CD4-positive, alpha-beta T cell (primary cell): ENCODE measurements at regions of chr10 and their contacts with region 1.

Region 1: DNA sequence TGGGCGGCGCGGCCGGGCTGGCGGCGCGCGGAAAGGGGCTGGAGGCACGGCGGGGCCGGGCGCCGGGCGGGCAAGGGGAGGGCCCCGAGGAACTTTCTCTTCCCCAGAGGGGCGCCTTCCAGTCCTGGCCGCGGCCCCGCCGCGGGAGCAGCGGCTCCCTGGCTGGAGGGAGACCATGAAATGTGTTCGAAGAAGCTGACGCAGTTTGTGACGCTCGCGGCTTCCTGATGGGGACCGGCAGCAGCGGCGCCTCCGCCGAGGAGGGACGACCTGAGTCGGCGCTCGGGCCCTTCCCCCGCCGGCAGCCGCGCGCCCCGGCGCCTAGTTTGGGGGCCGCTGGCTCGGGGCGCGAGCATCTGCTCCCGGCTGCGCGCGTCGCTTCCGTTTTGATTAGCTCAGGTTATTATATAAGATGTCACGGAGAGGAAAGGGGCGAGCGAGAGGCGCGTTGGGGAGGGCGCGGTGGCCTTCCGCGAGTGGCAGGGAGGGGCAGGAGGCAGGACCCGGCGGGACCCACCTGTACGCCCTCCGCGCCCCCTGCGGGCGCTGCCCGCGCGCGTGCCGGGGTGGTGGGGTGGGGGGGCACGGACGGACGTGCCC is 57.1 kb upstream of the PCGF5 start:
- DNase-seq: peak; percentile 61 to 94 (median 76)
- ATAC-seq: peak; percentile 71
- H3K4me3 ChIP-seq: peak overlapping the region; percentile 82
- H3K4me3 Mint-ChIP-seq: peak overlapping the region; percentile 98
- H3K27ac ChIP-seq: peak overlapping the region; percentile 79 to 87
- H3K27ac Mint-ChIP-seq: peak overlapping the region; percentile 98
- H3K4me1 ChIP-seq: peaks cover 19% of the 10 kb centered on the region
- H3K4me1 Mint-ChIP-seq: peaks cover 56% of the 10 kb centered on the region
- H3K27me3 ChIP-seq: no peaks in the 10 kb centered on the region
- H3K27me3 Mint-ChIP-seq: no peaks in the 10 kb centered on the region
- CTCF ChIP-seq: no peak

Region 2: GRCh38 chr10:89701238-89702120 is 1461.9 kb before region 1 on chr10 and contains the start of gene KIF20B:
- CTCF ChIA-PET with region 1: no interaction called
- POLR2A ChIA-PET with region 1: no interaction called
- intact Hi-C with region 1: loop called in 1 of 2 experiments (anchors 10 kb)
- DNase-seq: peak; percentile 90 to 98 (median 93)
- ATAC-seq: peak; percentile 95
- H3K4me3 ChIP-seq: peak within 1 kb of the TSS; percentile 87
- H3K4me3 Mint-ChIP-seq: peak within 1 kb of the TSS; percentile 97
- H3K27ac ChIP-seq: peak within 1 kb of the TSS; percentile 73 to 78
- H3K27ac Mint-ChIP-seq: peak within 1 kb of the TSS; percentile 99
- H3K4me1 ChIP-seq: peaks cover 9% of the 10 kb centered on the region
- H3K4me1 Mint-ChIP-seq: peaks cover 44% of the 10 kb centered on the region
- H3K27me3 ChIP-seq: no peaks in the 10 kb centered on the region
- H3K27me3 Mint-ChIP-seq: no peaks in the 10 kb centered on the region
- CTCF ChIP-seq: peak; percentile 24
- total RNA-seq, gene KIF20B: 17.1 to 18.4 TPM

Region 3: DNA sequence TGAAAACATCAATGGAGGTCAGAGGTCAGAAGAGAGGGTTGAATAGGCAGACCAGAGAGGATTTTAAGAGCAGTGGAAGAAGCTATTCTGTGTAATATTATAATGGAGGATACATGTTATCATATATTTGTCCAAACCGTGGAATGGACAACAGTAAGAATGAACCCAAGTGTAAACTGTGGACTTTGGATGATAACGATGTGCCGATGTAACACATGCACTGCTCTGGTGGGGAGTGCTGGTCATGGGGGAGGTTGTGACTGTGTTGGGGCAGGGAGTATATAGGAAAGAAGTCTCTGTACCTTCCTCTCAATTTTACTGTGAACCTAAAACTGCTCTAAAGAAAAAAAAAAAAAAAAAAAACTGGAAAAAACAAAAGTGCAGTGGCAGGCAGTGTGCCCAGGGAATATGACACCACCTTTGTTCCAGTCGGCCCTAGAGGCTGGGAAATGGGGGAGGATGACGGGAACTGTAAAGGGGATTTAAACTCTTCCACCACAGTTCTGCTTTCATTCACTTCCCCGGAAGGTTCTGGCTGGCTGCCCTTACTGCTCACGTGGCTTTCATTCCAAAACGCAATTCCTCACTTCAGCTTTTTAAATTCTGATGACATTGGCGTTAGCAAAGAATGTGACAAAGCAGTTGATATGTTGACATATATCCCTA is 128.7 kb before region 1 on chr10:
- CTCF ChIA-PET with region 1: no interaction called
- POLR2A ChIA-PET with region 1: interaction called, 20 read pairs
- intact Hi-C with region 1: loop called in 1 of 2 experiments (anchors 10 kb)
- DNase-seq: no peak
- ATAC-seq: no peak
- H3K4me3 ChIP-seq: no peak overlapping the region
- H3K4me3 Mint-ChIP-seq: peak overlapping the region; percentile 8
- H3K27ac ChIP-seq: peak overlapping the region; percentile 1 to 63
- H3K27ac Mint-ChIP-seq: peak overlapping the region; percentile 69
- H3K4me1 ChIP-seq: peaks cover 19% of the 10 kb centered on the region
- H3K4me1 Mint-ChIP-seq: peaks cover 21% of the 10 kb centered on the region
- H3K27me3 ChIP-seq: no peaks in the 10 kb centered on the region
- H3K27me3 Mint-ChIP-seq: no peaks in the 10 kb centered on the region
- CTCF ChIP-seq: no peak

Region 4: GRCh38 chr10:91210435-91210834 is 47.1 kb after region 1 on chr10:
- CTCF ChIA-PET with region 1: no interaction called
- POLR2A ChIA-PET with region 1: interaction called, 23 read pairs
- intact Hi-C with region 1: no loop called
- DNase-seq: peak in 6 of 14 experiments; percentile 15 to 82 (median 24)
- ATAC-seq: peak; percentile 43
- H3K4me3 ChIP-seq: no peak overlapping the region
- H3K4me3 Mint-ChIP-seq: no peak overlapping the region
- H3K27ac ChIP-seq: no peak overlapping the region
- H3K27ac Mint-ChIP-seq: no peak overlapping the region
- H3K4me1 ChIP-seq: peaks cover 22% of the 10 kb centered on the region
- H3K4me1 Mint-ChIP-seq: peaks cover 68% of the 10 kb centered on the region
- H3K27me3 ChIP-seq: no peaks in the 10 kb centered on the region
- H3K27me3 Mint-ChIP-seq: no peaks in the 10 kb centered on the region
- CTCF ChIP-seq: no peak

Region 5: GRCh38 chr10:91409869-91410637 is 246.7 kb after region 1 on chr10 and contains the start of gene HECTD2:
- CTCF ChIA-PET with region 1: no interaction called
- POLR2A ChIA-PET with region 1: interaction called, 6 read pairs
- intact Hi-C with region 1: loop called in 1 of 2 experiments (anchors 5 kb)
- DNase-seq: peak; percentile 61 to 94 (median 82)
- ATAC-seq: peak; percentile 85
- H3K4me3 ChIP-seq: peak within 1 kb of the TSS; percentile 92
- H3K4me3 Mint-ChIP-seq: peak within 1 kb of the TSS; percentile 92
- H3K27ac ChIP-seq: peak within 1 kb of the TSS; percentile 82 to 86
- H3K27ac Mint-ChIP-seq: peak within 1 kb of the TSS; percentile 86
- H3K4me1 ChIP-seq: peaks cover 14% of the 10 kb centered on the region
- H3K4me1 Mint-ChIP-seq: peaks cover 11% of the 10 kb centered on the region
- H3K27me3 ChIP-seq: peaks cover 3 to 8% of the 10 kb centered on the region in 2 experiments
- H3K27me3 Mint-ChIP-seq: no peaks in the 10 kb centered on the region
- CTCF ChIP-seq: peak; percentile 19
- total RNA-seq, gene HECTD2: 0.92 to 1.0 TPM

Region 6: DNA sequence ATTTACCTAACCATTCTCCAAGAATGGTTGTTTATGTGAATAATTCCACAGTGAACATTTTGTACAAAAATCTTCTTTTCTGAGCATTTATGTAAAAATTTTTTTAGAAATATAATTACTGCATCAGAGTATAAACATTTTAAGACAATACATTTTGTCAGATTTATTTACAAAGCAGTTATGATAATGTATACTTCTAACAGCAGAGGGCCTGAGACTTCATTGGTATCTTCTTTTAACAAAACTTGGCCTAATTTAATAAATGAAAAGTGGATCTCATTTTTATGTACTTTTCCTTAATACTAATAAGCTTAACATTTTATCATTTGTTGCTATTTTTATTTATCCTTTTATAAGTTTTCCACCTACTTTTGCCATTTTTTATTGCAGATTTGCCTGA is 316.2 kb after region 1 on chr10:
- CTCF ChIA-PET with region 1: no interaction called
- POLR2A ChIA-PET with region 1: no interaction called
- intact Hi-C with region 1: no loop called
- DNase-seq: no peak
- ATAC-seq: no peak
- H3K4me3 ChIP-seq: no peak overlapping the region
- H3K4me3 Mint-ChIP-seq: no peak overlapping the region
- H3K27ac ChIP-seq: no peak overlapping the region
- H3K27ac Mint-ChIP-seq: no peak overlapping the region
- H3K4me1 ChIP-seq: no peaks in the 10 kb centered on the region
- H3K4me1 Mint-ChIP-seq: no peaks in the 10 kb centered on the region
- H3K27me3 ChIP-seq: no peaks in the 10 kb centered on the region
- H3K27me3 Mint-ChIP-seq: no peaks in the 10 kb centered on the region
- CTCF ChIP-seq: no peak

Region 7: GRCh38 chr10:92848441-92849233 is 1685.3 kb after region 1 on chr10 and contains the start of gene EXOC6:
- CTCF ChIA-PET with region 1: no interaction called
- POLR2A ChIA-PET with region 1: interaction called, 4 read pairs
- intact Hi-C with region 1: loop called in 1 of 2 experiments (anchors 5 kb)
- DNase-seq: peak; percentile 75 to 95 (median 85)
- ATAC-seq: peak; percentile 87
- H3K4me3 ChIP-seq: peak within 1 kb of the TSS; percentile 69
- H3K4me3 Mint-ChIP-seq: peak within 1 kb of the TSS; percentile 94
- H3K27ac ChIP-seq: peak within 1 kb of the TSS; percentile 72
- H3K27ac Mint-ChIP-seq: peak within 1 kb of the TSS; percentile 85
- H3K4me1 ChIP-seq: peaks cover 12% of the 10 kb centered on the region
- H3K4me1 Mint-ChIP-seq: peaks cover 36% of the 10 kb centered on the region
- H3K27me3 ChIP-seq: no peaks in the 10 kb centered on the region
- H3K27me3 Mint-ChIP-seq: no peaks in the 10 kb centered on the region
- CTCF ChIP-seq: no peak
- total RNA-seq, gene EXOC6: 6.6 to 7.4 TPM